PC-3 (cell line): ENCODE measurements at regions of chr13 and their contacts with region 1.

Region 1: DNA sequence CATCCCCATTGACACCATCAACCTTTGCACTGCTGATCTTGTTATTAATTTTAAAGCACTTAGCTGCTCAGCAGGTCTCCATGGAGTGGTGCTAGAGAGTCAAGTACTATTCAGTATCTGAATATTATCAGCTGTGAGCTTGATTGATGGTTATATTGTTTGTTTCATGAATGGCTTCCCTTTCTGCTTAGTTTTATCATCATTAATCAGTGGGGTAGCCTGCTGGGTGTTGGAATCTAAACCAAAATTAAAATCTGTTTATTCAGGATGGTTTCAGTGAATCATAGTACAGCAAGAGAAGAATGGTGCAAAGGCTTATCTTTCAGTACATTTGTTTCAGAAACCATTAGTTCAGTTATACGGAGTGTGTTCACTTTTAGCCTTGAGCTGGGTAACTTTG is 42.5 kb upstream of the SCEL start:
- DNase-seq: peak; percentile 69
- ATAC-seq: peak; percentile 85
- H3K4me3 ChIP-seq: no peak overlapping the region
- H3K27ac ChIP-seq: no peak overlapping the region
- H3K4me1 ChIP-seq: no peaks in the 10 kb centered on the region; the same call in 1 of the 2 replicates
- H3K27me3 ChIP-seq: no peaks in the 10 kb centered on the region
- CTCF ChIP-seq: peak; percentile 82

Region 2: DNA sequence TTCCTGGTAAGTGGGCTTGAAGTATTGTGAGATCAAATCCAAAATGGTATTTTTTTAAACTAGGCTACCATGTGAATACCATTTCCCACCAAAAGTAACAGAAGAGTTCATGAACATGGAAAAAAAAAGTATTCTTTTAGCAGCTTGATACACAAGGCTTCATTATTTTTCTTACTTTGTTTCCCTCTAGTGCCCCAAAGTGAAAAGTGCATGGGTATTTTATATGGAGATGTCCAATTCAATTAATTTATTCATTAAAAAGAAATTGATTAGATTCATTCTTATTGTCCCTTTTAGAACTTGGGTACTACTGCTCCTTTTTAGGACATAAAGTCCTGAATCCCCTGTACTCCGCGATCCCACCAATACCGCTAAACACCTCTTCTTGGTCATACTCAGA is 13.9 kb after region 1 on chr13:
- CTCF ChIA-PET with region 1: interaction called, 10 read pairs
- POLR2A ChIA-PET with region 1: no interaction called
- intact Hi-C with region 1: no loop called
- DNase-seq: peak; percentile 30
- ATAC-seq: no peak
- H3K4me3 ChIP-seq: no peak overlapping the region
- H3K27ac ChIP-seq: peak overlapping the region; percentile 50; the same call in 1 of the 2 replicates
- H3K4me1 ChIP-seq: peaks cover 32% of the 10 kb centered on the region
- H3K27me3 ChIP-seq: no peaks in the 10 kb centered on the region
- CTCF ChIP-seq: peak; percentile 52; the same call in 1 of the 2 replicates

Region 3: GRCh38 chr13:77565635-77566034 is 72.7 kb after region 1 on chr13:
- CTCF ChIA-PET with region 1: interaction called, 6 read pairs
- POLR2A ChIA-PET with region 1: no interaction called
- intact Hi-C with region 1: loop called (anchors 1 kb)
- DNase-seq: peak; percentile 66
- ATAC-seq: peak; percentile 67
- H3K4me3 ChIP-seq: no peak overlapping the region
- H3K27ac ChIP-seq: no peak overlapping the region
- H3K4me1 ChIP-seq: 0 out of 2 replicates have a peak, but pooled peaks cover 3% of the 10 kb centered on the region
- H3K27me3 ChIP-seq: no peaks in the 10 kb centered on the region
- CTCF ChIP-seq: peak; percentile 73